Caco-2 (cell line): ENCODE measurements at regions of chr19 and their contacts with region 1.

Region 1: GRCh38 chr19:53879140-53880081 is 2.6 kb upstream of the PRKCG start:
- DNase-seq: peak; percentile 98 to 99
- H3K4me3 ChIP-seq: peak overlapping the region; percentile 74
- H3K4me3 Mint-ChIP-seq: no peak overlapping the region
- H3K27ac Mint-ChIP-seq: no peak overlapping the region
- H3K4me1 ChIP-seq: peaks cover 10% of the 10 kb centered on the region; the same call in 1 of the 2 replicates
- H3K4me1 Mint-ChIP-seq: peaks cover 22% of the 10 kb centered on the region
- H3K27me3 ChIP-seq: no peaks in the 10 kb centered on the region
- H3K27me3 Mint-ChIP-seq: peaks cover 4% of the 10 kb centered on the region
- CTCF ChIP-seq: no peak

Region 2: DNA sequence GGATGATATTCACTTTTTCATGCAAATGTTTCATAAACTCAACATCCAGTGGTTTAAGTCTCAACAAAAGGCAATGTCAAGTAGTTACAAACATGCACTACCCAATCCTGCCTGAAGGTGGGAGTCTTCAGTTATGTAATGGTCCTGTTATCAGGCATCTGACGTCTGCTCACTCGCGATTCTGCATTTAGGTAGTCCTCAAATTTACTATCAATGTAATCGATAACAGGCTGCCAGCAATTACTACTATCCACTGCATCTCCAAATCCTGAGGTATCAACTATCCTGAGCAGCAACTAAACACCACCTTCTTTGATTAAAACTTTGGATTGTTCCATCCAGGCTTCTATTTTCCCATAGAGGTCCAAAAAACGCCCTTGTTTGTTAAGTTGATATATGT is 106.5 kb before region 1 on chr19:
- CTCF ChIA-PET with region 1: interaction called, 4 read pairs
- POLR2A ChIA-PET with region 1: interaction called, 5 read pairs
- intact Hi-C with region 1: loop called (anchors 5 kb)
- DNase-seq: peak; percentile 73 to 79
- H3K4me3 ChIP-seq: no peak overlapping the region
- H3K4me3 Mint-ChIP-seq: peak overlapping the region; percentile 56
- H3K27ac Mint-ChIP-seq: peak overlapping the region; percentile 74
- H3K4me1 ChIP-seq: peaks cover 61% of the 10 kb centered on the region
- H3K4me1 Mint-ChIP-seq: peaks cover 44% of the 10 kb centered on the region
- H3K27me3 ChIP-seq: no peaks in the 10 kb centered on the region
- H3K27me3 Mint-ChIP-seq: no peaks in the 10 kb centered on the region
- CTCF ChIP-seq: peak; percentile 53 to 66

Region 3: GRCh38 chr19:53844849-53845246 is 34.6 kb before region 1 on chr19:
- CTCF ChIA-PET with region 1: no interaction called
- POLR2A ChIA-PET with region 1: no interaction called
- intact Hi-C with region 1: loop called (anchors 1 kb)
- DNase-seq: no peak
- H3K4me3 ChIP-seq: no peak overlapping the region
- H3K4me3 Mint-ChIP-seq: no peak overlapping the region
- H3K27ac Mint-ChIP-seq: no peak overlapping the region
- H3K4me1 ChIP-seq: no peaks in the 10 kb centered on the region
- H3K4me1 Mint-ChIP-seq: peaks cover 6% of the 10 kb centered on the region
- H3K27me3 ChIP-seq: no peaks in the 10 kb centered on the region
- H3K27me3 Mint-ChIP-seq: no peaks in the 10 kb centered on the region
- CTCF ChIP-seq: no peak

Region 4: GRCh38 chr19:53853707-53854106 is 25.7 kb before region 1 on chr19:
- CTCF ChIA-PET with region 1: interaction called, 3 read pairs
- POLR2A ChIA-PET with region 1: no interaction called
- intact Hi-C with region 1: loop called (anchors 1 kb)
- DNase-seq: no peak
- H3K4me3 ChIP-seq: no peak overlapping the region
- H3K4me3 Mint-ChIP-seq: no peak overlapping the region
- H3K27ac Mint-ChIP-seq: no peak overlapping the region
- H3K4me1 ChIP-seq: no peaks in the 10 kb centered on the region
- H3K4me1 Mint-ChIP-seq: peaks cover 12% of the 10 kb centered on the region
- H3K27me3 ChIP-seq: no peaks in the 10 kb centered on the region
- H3K27me3 Mint-ChIP-seq: no peaks in the 10 kb centered on the region
- CTCF ChIP-seq: no peak

Region 5: DNA sequence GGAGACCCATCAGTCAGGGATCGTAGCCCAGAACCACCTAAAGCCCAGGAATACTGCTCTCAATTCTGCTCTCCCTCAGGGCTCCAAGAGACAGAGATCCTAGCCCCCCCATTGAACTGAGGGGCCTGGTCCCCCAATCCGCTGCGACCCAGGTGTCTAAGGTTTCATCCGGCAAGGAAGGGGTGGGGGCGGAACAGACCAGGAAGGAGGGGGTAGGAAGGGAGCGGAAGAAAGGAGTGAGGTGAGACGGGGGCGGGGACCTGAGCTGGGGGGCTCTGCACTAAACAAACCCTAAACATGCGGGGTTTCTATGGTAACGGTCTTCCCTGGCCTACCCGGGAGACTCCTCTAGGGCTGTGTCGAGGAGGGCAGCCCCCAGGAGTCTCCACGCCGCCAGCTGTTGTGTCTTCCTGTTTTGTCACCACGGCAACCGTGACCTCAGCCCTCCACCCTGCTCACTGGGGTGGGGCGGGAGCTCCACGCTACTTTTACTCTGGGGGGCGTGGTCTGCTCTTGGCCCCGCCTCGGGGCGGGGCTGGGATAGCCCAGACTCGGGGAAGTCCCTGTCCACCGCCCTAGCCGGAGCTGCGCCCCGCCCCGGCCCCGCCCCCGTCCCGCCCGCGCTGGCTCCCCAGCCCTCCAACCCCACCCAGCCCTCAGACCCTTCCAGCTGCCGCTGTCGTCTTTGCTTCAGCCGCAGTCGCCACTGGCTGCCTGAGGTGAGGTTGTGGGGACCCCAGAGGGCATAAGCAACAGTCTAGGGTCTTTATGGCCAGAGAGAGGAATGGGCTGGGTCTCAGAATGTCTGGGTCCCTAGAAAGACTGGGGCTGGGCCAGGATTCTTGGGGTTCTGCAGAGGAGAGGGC is 12.0 kb before region 1 on chr19 and contains the start of gene MYADM:
- CTCF ChIA-PET with region 1: interaction called, 29 read pairs
- POLR2A ChIA-PET with region 1: interaction called, 37 read pairs
- intact Hi-C with region 1: loop called (anchors 1 kb)
- DNase-seq: peak; percentile 99
- H3K4me3 ChIP-seq: peak within 1 kb of the TSS; percentile 99
- H3K4me3 Mint-ChIP-seq: peak within 1 kb of the TSS; percentile 97
- H3K27ac Mint-ChIP-seq: peak within 1 kb of the TSS; percentile 100
- H3K4me1 ChIP-seq: peaks cover 37% of the 10 kb centered on the region
- H3K4me1 Mint-ChIP-seq: peaks cover 38% of the 10 kb centered on the region
- H3K27me3 ChIP-seq: no peaks in the 10 kb centered on the region
- H3K27me3 Mint-ChIP-seq: no peaks in the 10 kb centered on the region
- CTCF ChIP-seq: no peak
- total RNA-seq, gene MYADM: 115 and 132 TPM in 2 replicates

Region 6: GRCh38 chr19:53892981-53893325 is 13.5 kb after region 1 on chr19:
- CTCF ChIA-PET with region 1: no interaction called
- POLR2A ChIA-PET with region 1: no interaction called
- intact Hi-C with region 1: loop called (anchors 1 kb)
- DNase-seq: no peak
- H3K4me3 ChIP-seq: no peak overlapping the region
- H3K4me3 Mint-ChIP-seq: no peak overlapping the region
- H3K27ac Mint-ChIP-seq: no peak overlapping the region
- H3K4me1 ChIP-seq: no peaks in the 10 kb centered on the region
- H3K4me1 Mint-ChIP-seq: no peaks in the 10 kb centered on the region
- H3K27me3 ChIP-seq: no peaks in the 10 kb centered on the region
- H3K27me3 Mint-ChIP-seq: no peaks in the 10 kb centered on the region
- CTCF ChIP-seq: no peak

Region 7: DNA sequence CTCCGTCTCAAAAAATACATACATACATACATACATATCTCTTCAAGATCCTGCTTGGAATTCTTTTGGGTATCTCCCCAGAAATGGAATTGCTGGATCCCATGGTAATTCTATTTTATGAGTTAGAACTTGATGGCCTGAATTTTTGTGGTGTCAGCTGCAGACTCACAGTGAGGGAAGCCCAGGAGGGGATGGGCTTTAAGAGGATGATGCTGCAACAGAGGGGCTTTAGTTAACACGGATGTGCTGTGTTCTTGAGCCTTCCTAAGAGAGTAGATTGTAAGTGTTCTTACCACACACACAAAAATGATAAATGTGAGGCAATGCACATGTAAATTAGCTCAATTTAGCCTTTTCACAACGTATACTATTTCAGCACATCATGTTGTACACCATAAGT is 143.8 kb after region 1 on chr19:
- CTCF ChIA-PET with region 1: interaction called, 8 read pairs
- POLR2A ChIA-PET with region 1: no interaction called
- intact Hi-C with region 1: loop called (anchors 2 kb)
- DNase-seq: no peak
- H3K4me3 ChIP-seq: no peak overlapping the region
- H3K4me3 Mint-ChIP-seq: no peak overlapping the region
- H3K27ac Mint-ChIP-seq: no peak overlapping the region
- H3K4me1 ChIP-seq: peaks cover 5% of the 10 kb centered on the region
- H3K4me1 Mint-ChIP-seq: no peaks in the 10 kb centered on the region
- H3K27me3 ChIP-seq: no peaks in the 10 kb centered on the region
- H3K27me3 Mint-ChIP-seq: no peaks in the 10 kb centered on the region
- CTCF ChIP-seq: no peak